Aorta (tissue), 5 donors: ENCODE measurements at regions of chr4 and their contacts with region 1.

Region 1: DNA sequence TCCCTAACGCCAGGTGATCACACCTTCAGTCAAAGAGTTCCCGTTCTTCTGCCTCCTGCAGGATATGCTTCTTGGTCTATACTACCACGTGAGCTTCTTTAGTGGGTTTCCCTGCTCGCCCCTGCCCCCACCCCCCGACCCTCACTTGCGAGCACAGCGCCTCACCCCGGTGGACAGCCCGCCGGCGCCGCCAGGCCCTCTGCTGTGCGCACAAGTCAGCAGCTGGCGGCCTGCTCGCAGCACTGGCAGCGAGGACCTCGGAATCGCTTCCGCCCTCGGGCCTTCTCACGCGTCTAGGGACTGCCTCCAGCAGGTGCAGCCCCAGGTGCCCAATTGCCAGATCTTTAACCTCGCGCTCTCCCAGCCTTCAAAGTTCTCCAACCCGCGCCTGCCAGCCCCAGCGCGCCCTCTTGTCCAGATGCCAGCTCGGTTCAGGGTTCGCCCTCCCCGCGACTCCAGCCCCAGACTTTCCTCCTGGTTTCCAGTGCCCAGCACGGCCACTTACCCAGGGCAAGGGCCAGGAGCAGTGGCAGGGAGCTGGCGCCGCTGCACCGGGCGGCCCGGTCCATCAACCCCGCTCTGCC is 474 bp downstream of the BTC start:
- DNase-seq: peak; percentile 71 to 87
- ATAC-seq: peak; percentile 83
- H3K4me3 ChIP-seq: peak overlapping the region; percentile 56 to 78
- H3K27ac ChIP-seq: peak overlapping the region in 1 of 2 donors; percentile 74
- H3K4me1 ChIP-seq: peaks cover 0 to 3% of the 10 kb centered on the region in 2 donors
- H3K27me3 ChIP-seq: no peaks in the 10 kb centered on the region

Region 2: GRCh38 chr4:74370912-74371311 is 422.9 kb before region 1 on chr4:
- intact Hi-C with region 1: loop called in 1 of 2 experiments (anchors 10 kb)
- DNase-seq: no peak
- ATAC-seq: no peak
- H3K4me3 ChIP-seq: no peak overlapping the region
- H3K27ac ChIP-seq: no peak overlapping the region
- H3K4me1 ChIP-seq: no peaks in the 10 kb centered on the region
- H3K27me3 ChIP-seq: no peaks in the 10 kb centered on the region

Region 3: GRCh38 chr4:74543231-74543670 is 250.6 kb before region 1 on chr4:
- intact Hi-C with region 1: loop called in 1 of 2 experiments (anchors 10 kb)
- DNase-seq: no peak
- ATAC-seq: no peak
- H3K4me3 ChIP-seq: no peak overlapping the region
- H3K27ac ChIP-seq: no peak overlapping the region
- H3K4me1 ChIP-seq: peaks cover 0 to 6% of the 10 kb centered on the region in 2 donors
- H3K27me3 ChIP-seq: no peaks in the 10 kb centered on the region

Region 4: GRCh38 chr4:74570095-74570494 is 223.8 kb before region 1 on chr4:
- intact Hi-C with region 1: no loop called
- DNase-seq: no peak
- ATAC-seq: no peak
- H3K4me3 ChIP-seq: no peak overlapping the region
- H3K27ac ChIP-seq: no peak overlapping the region
- H3K4me1 ChIP-seq: no peaks in the 10 kb centered on the region
- H3K27me3 ChIP-seq: no peaks in the 10 kb centered on the region

Region 5: GRCh38 chr4:74692972-74693371 is 100.9 kb before region 1 on chr4:
- intact Hi-C with region 1: loop called in 1 of 2 experiments (anchors 5 kb)
- DNase-seq: peak in 1 of 2 donors; percentile 67
- ATAC-seq: peak; percentile 74
- H3K4me3 ChIP-seq: no peak overlapping the region
- H3K27ac ChIP-seq: peak overlapping the region; percentile 54 to 57
- H3K4me1 ChIP-seq: peaks cover 1 to 6% of the 10 kb centered on the region in 2 donors
- H3K27me3 ChIP-seq: no peaks in the 10 kb centered on the region

Region 6: DNA sequence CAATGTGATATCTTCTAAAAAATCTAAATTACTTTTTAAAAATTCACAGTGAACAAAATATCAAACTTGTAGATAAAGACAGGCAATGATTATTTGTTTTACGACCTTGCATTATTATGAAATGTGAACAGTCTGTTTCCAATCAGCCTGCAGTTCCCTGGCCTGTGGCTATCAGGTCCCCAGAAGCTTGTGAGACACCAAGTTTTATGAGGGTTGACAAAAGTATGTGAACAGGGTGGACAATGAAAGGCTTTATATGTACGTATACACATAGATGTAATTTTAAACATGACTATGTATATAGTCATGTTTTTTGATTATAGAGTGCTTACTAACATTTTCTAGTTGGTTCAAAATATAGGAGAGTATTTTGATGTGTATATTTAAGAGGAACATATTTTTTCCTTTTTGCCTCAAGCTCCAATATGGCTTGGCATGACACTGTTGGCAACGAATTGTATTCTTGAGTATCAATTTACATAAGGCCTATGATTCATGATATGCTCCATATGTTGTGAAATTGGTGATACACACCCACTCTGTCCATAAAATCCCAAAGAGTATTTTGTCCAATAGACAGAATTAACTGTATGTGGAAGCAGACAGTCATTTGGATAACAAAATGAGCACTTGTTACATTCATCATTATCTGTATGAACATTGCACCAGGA is 55.2 kb before region 1 on chr4:
- intact Hi-C with region 1: no loop called
- DNase-seq: no peak
- ATAC-seq: no peak
- H3K4me3 ChIP-seq: no peak overlapping the region
- H3K27ac ChIP-seq: no peak overlapping the region
- H3K4me1 ChIP-seq: no peaks in the 10 kb centered on the region
- H3K27me3 ChIP-seq: no peaks in the 10 kb centered on the region